PC-9 (cell line): ENCODE measurements at regions of chr17 and their contacts with region 1.

Region 1: DNA sequence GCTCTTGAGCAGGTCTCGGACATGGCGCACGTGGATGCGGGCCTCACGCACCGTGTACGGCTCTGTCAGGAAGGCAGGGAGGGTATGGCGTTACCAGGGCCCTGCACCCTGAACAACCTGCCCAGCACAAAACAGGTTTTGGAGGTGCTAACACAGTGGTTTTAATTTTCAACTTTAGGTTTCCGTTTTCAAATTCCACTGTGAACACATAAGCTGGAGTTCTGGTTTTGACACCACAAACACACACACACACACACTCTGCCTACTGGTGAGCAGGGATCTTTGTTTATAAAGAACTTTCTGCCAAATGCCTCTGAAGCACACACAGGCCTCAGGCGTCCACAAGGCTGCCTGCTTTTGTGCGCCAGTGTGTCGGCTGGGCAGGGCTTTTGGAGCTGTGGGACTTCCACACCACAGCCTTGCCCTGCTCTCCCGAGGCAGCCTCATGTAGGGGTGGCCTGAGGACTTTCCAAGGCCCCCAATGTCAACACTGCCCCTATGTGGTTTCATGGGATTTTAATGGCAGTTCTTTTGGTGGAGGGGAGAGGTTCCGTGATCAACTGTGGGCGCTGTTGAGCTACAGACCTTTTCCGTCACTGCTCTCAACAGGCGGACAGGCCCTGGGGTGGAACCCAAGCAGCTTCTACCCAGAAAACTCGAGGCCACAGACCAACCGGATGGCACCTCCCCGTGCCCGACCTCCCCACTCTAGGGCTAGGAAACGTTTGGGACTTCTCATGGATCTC is 9.4 kb downstream of the CLUH start:
- DNase-seq: peak in 1 of 2 experiments; percentile 21
- H3K4me3 ChIP-seq: no peak overlapping the region
- H3K27ac ChIP-seq: no peak overlapping the region
- H3K4me1 ChIP-seq: no peaks in the 10 kb centered on the region
- H3K27me3 ChIP-seq: no peaks in the 10 kb centered on the region
- CTCF ChIP-seq: no peak

Region 2: GRCh38 chr17:2680961-2681360 is 21.2 kb before region 1 on chr17:
- CTCF ChIA-PET with region 1: interaction called, 12 read pairs
- POLR2A ChIA-PET with region 1: no interaction called
- intact Hi-C with region 1: no loop called
- DNase-seq: no peak
- H3K4me3 ChIP-seq: no peak overlapping the region
- H3K27ac ChIP-seq: no peak overlapping the region
- H3K4me1 ChIP-seq: no peaks in the 10 kb centered on the region
- H3K27me3 ChIP-seq: no peaks in the 10 kb centered on the region
- CTCF ChIP-seq: no peak

Region 3: DNA sequence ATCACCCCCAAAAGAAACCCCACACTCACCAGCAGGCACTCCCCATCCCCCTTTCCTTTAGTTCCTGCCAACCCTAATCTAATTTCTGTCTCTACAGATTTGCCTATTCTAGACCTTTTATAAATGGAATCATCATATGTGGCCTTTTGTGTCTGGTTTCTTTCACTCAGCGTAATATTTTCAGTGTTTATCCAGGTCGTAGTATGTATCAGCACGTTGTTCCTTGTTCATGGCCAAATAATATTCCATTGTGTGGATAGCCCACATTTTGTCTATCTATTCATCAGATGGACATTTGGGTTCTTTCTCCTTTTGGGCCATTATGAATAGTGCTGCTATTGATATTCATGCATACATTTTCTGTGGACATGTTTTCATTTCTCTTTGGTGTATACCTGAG is 287.7 kb after region 1 on chr17:
- CTCF ChIA-PET with region 1: interaction called, 13 read pairs
- POLR2A ChIA-PET with region 1: no interaction called
- intact Hi-C with region 1: no loop called
- DNase-seq: no peak
- H3K4me3 ChIP-seq: no peak overlapping the region
- H3K27ac ChIP-seq: no peak overlapping the region
- H3K4me1 ChIP-seq: no peaks in the 10 kb centered on the region
- H3K27me3 ChIP-seq: no peaks in the 10 kb centered on the region
- CTCF ChIP-seq: no peak